ENCODE measurements at regions of chr22 and their contacts with region 1.

Region 1: GRCh38 chr22:17997456-17997855 is 26.9 kb downstream of the MICAL3 start:
- DNase-seq: no peak
- H3K4me3 ChIP-seq: no peak overlapping the region
- H3K27ac ChIP-seq: no peak overlapping the region
- H3K4me1 ChIP-seq: peaks cover 57% of the 10 kb centered on the region
- H3K27me3 ChIP-seq: no peaks in the 10 kb centered on the region
- CTCF ChIP-seq: no peak

Region 2: DNA sequence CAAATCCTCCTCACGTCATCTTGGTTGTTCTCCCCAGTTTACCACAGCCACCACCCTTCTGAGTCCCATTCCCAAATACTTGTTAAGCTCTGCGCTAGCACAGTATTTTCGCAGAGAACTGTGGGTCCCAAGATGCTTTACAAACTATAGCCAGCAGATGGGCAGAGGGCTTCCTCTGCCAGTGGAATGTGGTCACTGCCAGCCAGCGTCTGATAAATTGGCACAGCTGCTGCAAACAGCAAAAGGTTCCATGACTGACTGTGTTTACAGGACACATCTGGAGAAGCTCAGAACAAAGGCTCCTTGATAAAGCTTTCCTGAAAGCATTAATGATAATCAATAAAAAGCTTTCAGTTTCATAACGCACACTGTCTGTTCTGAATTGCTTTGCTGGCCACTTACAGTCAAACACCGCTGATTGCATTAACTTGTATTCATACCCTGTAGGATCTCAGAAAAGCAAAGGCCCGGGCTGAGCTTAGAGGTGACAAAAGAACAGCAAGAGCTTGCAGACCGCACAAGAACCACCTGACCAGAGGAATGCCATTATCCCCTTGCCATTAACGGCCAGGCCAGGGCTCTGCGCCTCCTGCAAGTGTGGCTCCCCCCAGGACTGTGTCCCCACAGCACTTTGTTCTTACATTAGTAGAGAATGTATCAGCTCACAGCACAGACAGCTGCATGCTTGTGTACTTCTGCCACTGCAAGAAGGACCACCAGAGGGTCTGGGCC is 93.7 kb before region 1 on chr22:
- intact Hi-C with region 1: loop called (anchors 10 kb)
- DNase-seq: peak; percentile 40
- H3K4me3 ChIP-seq: no peak overlapping the region
- H3K27ac ChIP-seq: peak overlapping the region; percentile 95
- H3K4me1 ChIP-seq: peaks cover 68% of the 10 kb centered on the region
- H3K27me3 ChIP-seq: no peaks in the 10 kb centered on the region
- CTCF ChIP-seq: peak; percentile 33

Region 3: DNA sequence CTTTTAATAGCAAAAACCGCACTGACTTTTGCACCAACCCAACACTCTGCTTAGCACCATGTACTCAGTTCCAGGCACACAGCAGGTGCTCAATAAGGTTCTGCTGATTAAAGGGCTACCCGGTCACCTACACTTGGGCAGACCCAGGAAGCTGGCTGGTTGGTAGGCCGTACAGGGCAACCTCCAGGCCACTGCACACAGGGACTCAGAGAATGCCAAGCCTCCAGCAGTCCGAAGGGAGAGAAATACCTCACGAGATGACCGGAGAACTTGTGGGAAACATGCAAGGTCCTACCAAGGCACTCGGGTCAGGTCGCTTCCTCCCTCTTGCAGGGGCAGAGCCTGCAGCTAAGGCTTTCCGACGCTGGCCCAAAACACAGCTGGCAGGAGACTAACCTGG is 82.3 kb before region 1 on chr22:
- intact Hi-C with region 1: no loop called
- DNase-seq: no peak
- H3K4me3 ChIP-seq: no peak overlapping the region
- H3K27ac ChIP-seq: peak overlapping the region; percentile 95
- H3K4me1 ChIP-seq: peaks cover 99% of the 10 kb centered on the region
- H3K27me3 ChIP-seq: no peaks in the 10 kb centered on the region
- CTCF ChIP-seq: no peak

Region 4: GRCh38 chr22:17950651-17951214 is 46.7 kb before region 1 on chr22:
- intact Hi-C with region 1: no loop called
- DNase-seq: peak; percentile 35
- H3K4me3 ChIP-seq: no peak overlapping the region
- H3K27ac ChIP-seq: peak overlapping the region; percentile 86
- H3K4me1 ChIP-seq: peaks cover 88% of the 10 kb centered on the region
- H3K27me3 ChIP-seq: no peaks in the 10 kb centered on the region
- CTCF ChIP-seq: no peak